ENCODE measurements at regions of chr6 and their contacts with region 1.

Region 1: DNA sequence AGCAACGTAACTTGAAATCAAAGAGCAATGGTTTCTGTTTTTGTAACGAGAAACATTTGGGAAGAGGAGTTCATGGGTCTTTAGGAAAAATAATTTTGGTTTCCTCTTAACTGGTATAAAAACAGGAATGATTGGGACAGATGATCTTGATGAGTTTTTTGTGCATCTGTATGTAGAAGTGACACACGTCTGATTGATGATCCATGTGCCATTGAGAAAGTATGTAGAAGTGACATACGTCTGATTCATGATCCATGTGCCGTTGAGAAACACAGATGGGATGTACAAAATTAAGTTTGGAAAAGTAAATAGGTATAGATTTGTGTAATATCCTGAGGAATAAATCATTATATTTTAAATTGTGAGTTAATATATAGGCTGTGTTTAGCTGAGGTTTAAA is 2.1 kb downstream of the KIAA1586 start:
- DNase-seq: no peak
- H3K4me3 ChIP-seq: no peak overlapping the region
- H3K27ac ChIP-seq: no peak overlapping the region
- H3K4me1 ChIP-seq: peaks cover 17% of the 10 kb centered on the region
- H3K27me3 ChIP-seq: no peaks in the 10 kb centered on the region
- CTCF ChIP-seq: no peak
- POLR2A ChIP-seq: no peak

Region 2: DNA sequence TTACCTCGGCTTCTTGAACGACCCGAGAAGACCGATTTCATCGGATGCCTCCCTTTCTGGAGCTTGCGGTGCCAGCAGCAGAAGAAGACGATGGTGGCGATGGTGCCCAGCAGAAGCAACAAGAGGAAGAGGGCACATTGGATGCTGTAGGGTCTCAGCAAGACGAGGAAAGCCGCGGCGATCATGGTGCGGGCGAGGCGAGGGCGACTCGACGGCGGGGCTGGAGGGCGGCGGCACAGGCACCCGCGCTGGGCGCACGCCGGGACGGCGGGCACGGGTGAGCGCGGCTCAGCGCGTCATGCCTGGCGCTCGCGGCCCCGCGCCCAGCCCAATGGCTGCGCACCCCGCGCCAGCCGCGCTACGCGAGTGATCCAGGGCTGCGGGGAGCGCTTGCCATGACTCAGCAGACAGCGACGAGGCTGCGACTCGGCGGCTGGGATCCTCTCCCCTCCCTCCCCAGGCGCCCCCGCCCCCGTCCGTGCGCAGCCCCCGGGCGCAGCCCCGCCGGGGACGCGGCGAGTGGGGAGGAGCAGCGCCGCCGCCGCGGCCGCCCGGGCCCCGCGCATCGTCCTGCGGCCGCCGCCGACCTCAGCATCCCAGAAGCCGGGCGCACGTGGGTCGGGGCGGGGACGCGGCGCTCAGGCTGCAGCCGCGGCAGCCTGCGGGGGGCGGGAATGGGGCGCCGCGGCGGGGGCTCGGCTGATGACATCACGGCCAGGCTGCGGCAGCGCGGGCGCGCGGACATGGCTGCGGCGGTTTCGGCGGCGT is 94.0 kb before region 1 on chr6 and contains the start of gene BEND6:
- intact Hi-C with region 1: loop called (anchors 5 kb)
- DNase-seq: no peak
- H3K4me3 ChIP-seq: peak within 1 kb of the TSS; percentile 56 to 77
- H3K27ac ChIP-seq: peak within 1 kb of the TSS; percentile 76
- H3K4me1 ChIP-seq: peaks cover 15% of the 10 kb centered on the region
- H3K27me3 ChIP-seq: no peaks in the 10 kb centered on the region
- CTCF ChIP-seq: no peak
- POLR2A ChIP-seq: peak in 1 of 2 donors; percentile 7
- total RNA-seq, gene BEND6: 1.5 TPM

Region 3: DNA sequence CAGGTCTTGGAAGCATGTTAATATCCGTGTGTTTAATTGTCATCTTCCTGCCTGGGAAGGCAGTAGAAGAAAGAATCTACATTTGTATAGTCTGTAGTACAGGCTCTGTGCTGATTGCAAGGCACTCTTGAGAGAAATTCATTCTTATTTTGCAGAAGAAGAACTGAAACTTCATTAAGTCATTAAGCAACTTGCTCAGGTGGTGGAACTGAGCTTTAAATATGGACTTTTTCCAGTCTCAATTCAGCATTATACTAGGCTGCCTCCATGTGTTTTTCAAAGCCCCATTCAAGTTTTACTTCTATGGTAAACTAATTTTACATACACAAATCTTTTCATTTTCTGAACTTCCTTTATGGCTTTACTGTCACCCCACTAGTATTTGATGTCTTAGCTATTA is 60.1 kb after region 1 on chr6:
- intact Hi-C with region 1: no loop called
- DNase-seq: no peak
- H3K4me3 ChIP-seq: no peak overlapping the region
- H3K27ac ChIP-seq: no peak overlapping the region
- H3K4me1 ChIP-seq: no peaks in the 10 kb centered on the region
- H3K27me3 ChIP-seq: no peaks in the 10 kb centered on the region
- CTCF ChIP-seq: no peak
- POLR2A ChIP-seq: no peak

Region 4: GRCh38 chr6:57324538-57324937 is 276.0 kb after region 1 on chr6:
- intact Hi-C with region 1: no loop called
- DNase-seq: no peak
- H3K4me3 ChIP-seq: no peak overlapping the region
- H3K27ac ChIP-seq: no peak overlapping the region
- H3K4me1 ChIP-seq: no peaks in the 10 kb centered on the region
- H3K27me3 ChIP-seq: no peaks in the 10 kb centered on the region
- CTCF ChIP-seq: peak in 2 of 3 experiments; percentile 30 to 35
- POLR2A ChIP-seq: no peak

Measured in vagina (tissue), 2 donors.